Posterior vena cava (tissue), 2 donors: ENCODE measurements at regions of chr20 and their contacts with region 1.

Region 1: GRCh38 chr20:11949711-11950110 is 32.0 kb downstream of the BTBD3 start:
- DNase-seq: no peak

Region 2: DNA sequence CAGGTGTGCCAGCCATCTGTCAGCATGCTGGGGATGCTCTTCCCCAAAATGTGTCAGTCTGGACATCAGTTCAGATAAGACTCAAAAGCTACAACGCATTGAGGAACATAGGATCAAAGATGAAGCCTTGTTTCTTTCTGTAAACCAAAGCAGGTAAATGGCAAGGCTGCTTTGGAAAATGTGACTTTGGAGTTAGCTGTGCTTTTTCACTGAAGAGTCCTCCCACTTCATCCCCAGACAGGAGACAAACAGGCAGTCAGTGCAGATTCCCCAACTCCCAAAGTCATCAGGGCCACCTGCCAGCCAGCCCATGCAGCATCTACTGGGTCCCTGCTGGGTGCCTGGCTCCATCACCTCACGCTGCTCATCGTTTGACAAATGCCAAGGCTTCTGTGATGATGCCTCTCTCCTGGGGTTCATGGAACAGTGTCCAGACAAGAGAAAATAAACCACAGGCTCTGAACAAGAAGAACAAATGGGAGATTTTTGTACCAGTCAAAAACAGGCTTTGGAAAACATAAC is 237.0 kb before region 1 on chr20:
- intact Hi-C with region 1: no loop called
- DNase-seq: no peak

Region 3: DNA sequence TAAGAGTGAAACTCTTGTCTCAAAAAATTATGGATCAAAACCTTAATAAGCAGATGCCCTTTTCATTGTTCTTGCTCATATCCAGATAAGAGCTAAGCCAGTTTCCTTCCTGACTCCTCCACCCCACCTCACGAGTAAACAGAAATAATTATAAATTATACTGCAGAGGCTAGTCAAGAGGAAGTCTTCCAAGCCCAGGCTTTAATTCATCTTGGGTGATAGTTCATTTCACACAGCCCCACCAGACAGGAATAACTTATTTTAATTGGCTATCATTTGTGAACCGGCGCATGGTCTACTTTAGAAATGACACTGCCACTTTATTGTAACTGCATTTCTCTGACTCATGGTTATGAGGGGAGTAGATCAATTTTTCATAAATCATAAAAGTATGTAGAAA is 70.0 kb after region 1 on chr20:
- intact Hi-C with region 1: loop called in 1 of 2 experiments (anchors 2 kb)
- DNase-seq: no peak